Colonic mucosa (tissue), 4 donors: ENCODE measurements at regions of chr1 and their contacts with region 1.

Region 1: GRCh38 chr1:117067533-117068370 is 7.6 kb downstream of the TTF2 start:
- DNase-seq: peak; percentile 34
- H3K4me3 ChIP-seq: no peak overlapping the region
- H3K27ac ChIP-seq: no peak overlapping the region
- H3K4me1 ChIP-seq: no peaks in the 10 kb centered on the region
- H3K27me3 ChIP-seq: no peaks in the 10 kb centered on the region
- CTCF ChIP-seq: peak; percentile 66

Region 2: GRCh38 chr1:117124661-117125060 is 56.9 kb after region 1 on chr1:
- intact Hi-C with region 1: loop called (anchors 2 kb)
- DNase-seq: no peak
- H3K4me3 ChIP-seq: no peak overlapping the region
- H3K27ac ChIP-seq: no peak overlapping the region
- H3K4me1 ChIP-seq: no peaks in the 10 kb centered on the region
- H3K27me3 ChIP-seq: no peaks in the 10 kb centered on the region
- CTCF ChIP-seq: no peak

Region 3: GRCh38 chr1:117284399-117285215 is 216.9 kb after region 1 on chr1:
- intact Hi-C with region 1: loop called (anchors 5 kb)
- DNase-seq: peak; percentile 19
- H3K4me3 ChIP-seq: no peak overlapping the region
- H3K27ac ChIP-seq: no peak overlapping the region
- H3K4me1 ChIP-seq: no peaks in the 10 kb centered on the region
- H3K27me3 ChIP-seq: no peaks in the 10 kb centered on the region
- CTCF ChIP-seq: peak; percentile 41

Region 4: DNA sequence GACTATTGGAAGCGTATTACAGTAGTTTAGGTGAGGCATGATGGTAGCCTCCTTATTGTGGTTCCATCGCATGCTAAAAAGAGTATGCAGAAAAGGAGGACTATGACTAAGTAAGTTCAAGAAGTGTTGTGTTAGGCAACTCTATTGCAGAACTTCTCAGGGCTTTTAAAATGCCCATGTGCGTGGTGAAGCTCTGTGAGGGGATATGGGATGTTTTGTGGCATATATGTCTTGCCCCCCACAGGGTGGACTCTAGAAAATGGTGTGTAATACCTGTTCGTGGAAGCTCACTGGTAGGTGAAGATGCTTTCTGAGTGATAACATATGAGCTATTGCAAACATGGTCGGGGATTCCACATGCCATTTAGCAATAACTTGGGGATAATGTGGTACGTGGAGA is 331.2 kb after region 1 on chr1:
- intact Hi-C with region 1: no loop called
- DNase-seq: no peak
- H3K4me3 ChIP-seq: no peak overlapping the region
- H3K27ac ChIP-seq: no peak overlapping the region
- H3K4me1 ChIP-seq: no peaks in the 10 kb centered on the region
- H3K27me3 ChIP-seq: no peaks in the 10 kb centered on the region
- CTCF ChIP-seq: no peak